ENCODE measurements at regions of chr7 and their contacts with region 1.

Region 1: DNA sequence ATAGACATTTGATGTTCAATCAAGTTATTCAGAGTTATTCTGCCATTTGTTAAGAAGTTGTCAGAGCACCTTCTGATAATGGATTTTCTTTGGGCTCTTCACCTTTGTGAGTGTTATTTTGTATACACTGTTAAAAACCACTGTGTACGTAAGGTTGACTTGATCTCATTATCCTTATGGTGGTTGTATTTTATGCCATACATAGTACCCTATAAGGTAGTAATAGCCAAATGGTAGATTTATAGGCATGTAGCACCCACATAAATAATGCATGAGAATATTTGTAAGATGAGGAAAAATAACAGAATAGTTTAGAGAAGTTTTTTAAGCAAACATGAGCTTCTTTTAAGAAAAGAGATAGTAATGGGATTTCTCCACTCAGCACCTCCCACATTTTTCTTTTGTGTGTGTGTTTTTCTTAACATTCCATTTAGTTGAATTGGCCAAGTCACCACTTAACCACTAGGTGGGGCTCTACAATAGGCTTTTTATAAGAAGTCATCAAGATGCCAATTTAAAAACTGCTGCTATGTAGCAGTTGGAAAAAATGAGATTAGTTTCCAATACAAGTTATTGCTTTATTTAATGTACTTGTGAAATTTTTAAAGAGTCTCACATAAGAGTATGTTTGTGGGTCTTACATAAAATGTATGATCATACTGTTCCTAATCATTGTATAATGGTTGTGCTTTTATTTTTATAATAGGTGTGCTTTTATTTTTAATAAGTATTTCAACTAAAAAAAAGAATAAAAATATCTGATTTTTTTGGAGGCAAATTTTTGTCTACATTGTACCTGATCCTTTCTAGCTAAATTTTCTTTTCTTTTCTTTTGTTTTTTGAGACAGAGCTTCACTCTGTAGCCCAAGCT is 41.1 kb upstream of the STMP1 start:
- DNase-seq: peak in 4 of 5 donors; percentile 29 to 41 (median 34)
- H3K4me3 ChIP-seq: no peak overlapping the region
- H3K4me3 Mint-ChIP-seq: no peak overlapping the region
- H3K27ac ChIP-seq: no peak overlapping the region
- H3K27ac Mint-ChIP-seq: no peak overlapping the region
- H3K4me1 ChIP-seq: no peaks in the 10 kb centered on the region
- H3K4me1 Mint-ChIP-seq: no peaks in the 10 kb centered on the region
- H3K27me3 ChIP-seq: no peaks in the 10 kb centered on the region
- H3K27me3 Mint-ChIP-seq: no peaks in the 10 kb centered on the region

Region 2: DNA sequence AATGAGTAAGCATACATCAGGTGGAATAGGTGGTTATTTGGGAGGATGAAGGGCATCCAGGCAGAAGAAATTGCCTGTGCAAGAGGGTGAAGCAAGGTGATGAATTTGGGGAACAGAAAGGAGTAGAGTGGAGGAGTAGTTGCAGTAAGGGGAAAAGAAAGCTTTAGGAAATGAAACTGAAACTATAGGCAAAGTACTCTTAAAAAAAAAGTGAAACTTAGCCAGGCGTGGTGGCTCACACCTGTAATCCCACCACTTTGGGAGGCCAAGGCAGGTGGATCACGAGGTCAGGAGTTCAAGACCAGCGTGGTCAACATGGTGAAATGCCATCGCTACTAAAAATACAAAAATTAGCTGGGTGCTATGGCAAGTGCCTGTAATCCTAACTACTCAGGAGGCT is 45.9 kb before region 1 on chr7:
- CTCF ChIA-PET with region 1: interaction called, 3 read pairs
- POLR2A ChIA-PET with region 1: no interaction called
- intact Hi-C with region 1: loop called (anchors 10 kb)
- DNase-seq: no peak
- H3K4me3 ChIP-seq: no peak overlapping the region
- H3K4me3 Mint-ChIP-seq: peak overlapping the region in 5 of 8 donors; percentile 25 to 64 (median 46)
- H3K27ac ChIP-seq: no peak overlapping the region
- H3K27ac Mint-ChIP-seq: peak overlapping the region in 6 of 7 donors; percentile 38 to 70 (median 64)
- H3K4me1 ChIP-seq: peaks cover 6% of the 10 kb centered on the region
- H3K4me1 Mint-ChIP-seq: peaks cover 8 to 17% (median 11%) of the 10 kb centered on the region in 4 donors
- H3K27me3 ChIP-seq: no peaks in the 10 kb centered on the region
- H3K27me3 Mint-ChIP-seq: no peaks in the 10 kb centered on the region

Region 3: DNA sequence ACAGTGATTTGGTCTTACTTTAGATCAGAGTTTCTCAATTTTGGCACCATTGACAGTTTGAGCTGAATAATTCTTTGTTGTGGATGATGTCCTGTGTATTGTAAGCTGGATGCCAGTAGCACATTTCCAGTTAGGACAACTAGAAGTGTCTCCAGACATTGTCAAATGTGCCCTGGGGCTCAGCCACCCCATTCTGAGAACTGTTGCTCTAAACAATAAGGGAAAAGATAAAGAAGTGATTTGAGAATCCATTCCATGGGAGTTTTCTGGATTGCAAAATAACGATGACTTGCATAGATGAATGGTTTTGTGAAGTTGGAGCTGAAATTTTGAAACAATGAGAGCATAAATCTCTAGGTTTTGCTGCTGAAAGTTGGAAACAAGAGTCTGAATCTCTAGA is 18.9 kb before region 1 on chr7:
- CTCF ChIA-PET with region 1: interaction called, 10 read pairs
- POLR2A ChIA-PET with region 1: no interaction called
- intact Hi-C with region 1: no loop called
- DNase-seq: no peak
- H3K4me3 ChIP-seq: no peak overlapping the region
- H3K4me3 Mint-ChIP-seq: no peak overlapping the region
- H3K27ac ChIP-seq: no peak overlapping the region
- H3K27ac Mint-ChIP-seq: peak overlapping the region in 1 of 7 donors; percentile 57
- H3K4me1 ChIP-seq: no peaks in the 10 kb centered on the region
- H3K4me1 Mint-ChIP-seq: no peaks in the 10 kb centered on the region
- H3K27me3 ChIP-seq: no peaks in the 10 kb centered on the region
- H3K27me3 Mint-ChIP-seq: no peaks in the 10 kb centered on the region

Measured in CD4-positive, alpha-beta memory T cell (primary cell).